ENCODE measurements at regions of chr15 and their contacts with region 1.

Region 1: GRCh38 chr15:68231102-68231818 is 1.7 kb upstream of the CLN6 start:
- H3K4me3 ChIP-seq: no peak overlapping the region
- H3K27ac ChIP-seq: no peak overlapping the region
- H3K4me1 ChIP-seq: peaks cover 4% of the 10 kb centered on the region; the same call in 1 of the 2 replicates
- CTCF ChIP-seq: no peak

Region 2: DNA sequence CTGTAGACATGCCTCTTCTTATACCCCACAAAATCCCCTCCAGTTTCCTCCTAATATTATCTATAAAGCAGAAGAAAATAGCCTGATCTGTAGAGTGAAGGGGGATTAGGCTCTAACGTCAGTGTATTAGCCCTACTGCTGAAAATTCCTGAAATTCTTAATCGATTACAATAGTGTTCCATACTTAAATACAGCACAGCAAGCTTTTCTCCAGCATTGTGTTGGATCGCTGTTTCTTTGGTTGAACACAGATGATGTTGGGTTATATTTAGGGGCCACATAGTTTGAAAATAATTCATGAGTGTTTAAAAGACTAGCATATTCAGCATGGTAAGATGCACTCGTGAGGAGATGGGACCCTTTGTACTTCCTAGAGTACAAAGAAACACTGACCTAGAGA is 124.6 kb before region 1 on chr15:
- CTCF ChIA-PET with region 1: no interaction called
- POLR2A ChIA-PET with region 1: interaction called, 10 read pairs
- H3K4me3 ChIP-seq: no peak overlapping the region
- H3K27ac ChIP-seq: no peak overlapping the region
- H3K4me1 ChIP-seq: no peaks in the 10 kb centered on the region
- CTCF ChIP-seq: no peak

Measured in HEK293 (cell line).